Calu3 (cell line): ENCODE measurements at regions of chr15 and their contacts with region 1.

Region 1: DNA sequence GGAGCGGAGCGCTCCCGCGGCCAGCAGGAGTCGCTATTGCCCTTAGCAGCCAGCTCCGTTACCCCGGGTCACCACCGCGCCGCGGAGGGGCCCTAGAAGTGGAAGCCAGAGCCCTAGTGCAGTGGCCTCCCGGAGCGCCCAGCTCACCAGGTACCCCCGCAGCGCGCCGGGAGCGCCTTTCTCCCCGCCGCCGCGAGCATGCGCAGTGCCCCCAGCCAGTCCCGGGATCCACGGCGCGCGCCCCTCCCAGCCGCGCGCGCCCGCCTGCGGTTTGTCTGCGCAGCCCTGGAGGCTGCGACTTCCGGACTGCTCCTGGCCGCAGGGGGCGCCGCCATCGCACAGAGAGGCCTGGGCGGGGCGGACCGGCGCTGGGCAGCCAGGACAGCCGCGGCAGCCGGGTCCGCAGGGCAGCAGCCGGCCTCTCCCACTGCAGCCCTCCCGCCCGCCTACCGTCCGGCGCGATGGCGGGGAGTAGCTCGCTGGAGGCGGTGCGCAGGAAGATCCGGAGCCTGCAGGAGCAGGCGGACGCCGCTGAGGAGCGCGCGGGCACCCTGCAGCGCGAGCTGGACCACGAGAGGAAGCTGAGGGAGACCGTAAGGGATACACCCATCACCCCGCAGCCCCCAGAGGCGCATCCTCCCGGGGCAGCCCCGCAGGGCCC is 5.7 kb downstream of the TPM1 start:
- DNase-seq: peak; percentile 99
- H3K4me3 Mint-ChIP-seq: peak overlapping the region; percentile 98
- H3K27ac Mint-ChIP-seq: peak overlapping the region; percentile 77
- H3K4me1 Mint-ChIP-seq: peaks cover 76% of the 10 kb centered on the region
- H3K27me3 Mint-ChIP-seq: no peaks in the 10 kb centered on the region
- CTCF ChIP-seq: peak; percentile 91

Region 2: DNA sequence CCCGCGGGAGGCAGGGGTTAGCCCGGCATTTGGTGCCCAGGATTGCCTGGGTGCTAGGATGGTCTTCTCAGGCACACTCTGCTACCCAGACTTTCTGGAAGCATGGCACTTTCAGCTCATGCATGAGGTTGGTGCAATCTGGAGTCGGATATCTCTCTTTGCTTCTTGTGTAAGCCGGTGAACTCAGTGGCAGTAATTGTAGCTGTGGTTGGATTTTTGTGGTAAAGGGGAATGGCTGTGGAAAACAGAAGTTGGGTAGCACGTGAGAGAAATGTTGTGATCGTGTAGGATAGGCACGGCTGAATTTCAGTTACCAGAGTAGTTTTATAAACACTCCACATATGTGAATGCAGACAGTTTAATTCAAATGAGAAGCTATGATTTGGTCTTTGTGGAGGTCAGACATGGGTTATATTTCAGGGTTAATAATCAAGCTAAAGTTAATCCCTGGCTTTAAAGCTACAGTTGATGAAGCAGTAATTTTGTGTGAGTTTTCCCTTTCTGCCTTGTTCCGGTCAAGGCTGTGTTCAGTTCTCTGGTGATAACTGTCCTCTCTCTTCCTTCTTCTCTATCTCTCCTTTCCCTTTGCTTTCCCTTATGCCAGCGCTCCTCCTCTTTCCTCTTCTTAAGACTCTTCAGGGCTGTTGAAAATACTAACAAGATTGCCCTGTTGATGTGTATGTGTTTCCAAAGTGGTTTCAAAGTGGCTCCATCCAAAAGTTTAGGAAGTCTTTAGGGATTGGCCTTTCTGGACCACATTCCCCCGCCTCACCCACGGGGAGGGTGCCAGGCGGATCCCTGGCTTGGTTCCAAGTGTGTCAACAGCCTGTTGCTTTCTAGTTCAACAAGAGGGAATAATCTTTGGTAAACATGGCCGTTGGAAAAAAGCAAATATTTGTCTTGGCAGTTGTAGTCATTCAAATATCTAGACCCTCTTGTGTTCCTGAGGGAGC is 478.5 kb before region 1 on chr15:
- CTCF ChIA-PET with region 1: no interaction called
- intact Hi-C with region 1: no loop called
- DNase-seq: peak; percentile 81
- H3K4me3 Mint-ChIP-seq: peak overlapping the region; percentile 15
- H3K27ac Mint-ChIP-seq: no peak overlapping the region
- H3K4me1 Mint-ChIP-seq: peaks cover 28% of the 10 kb centered on the region
- H3K27me3 Mint-ChIP-seq: peaks cover 61% of the 10 kb centered on the region
- CTCF ChIP-seq: no peak

Region 3: GRCh38 chr15:63006032-63006878 is 42.0 kb before region 1 on chr15:
- CTCF ChIA-PET with region 1: no interaction called
- intact Hi-C with region 1: no loop called
- DNase-seq: no peak
- H3K4me3 Mint-ChIP-seq: no peak overlapping the region
- H3K27ac Mint-ChIP-seq: no peak overlapping the region
- H3K4me1 Mint-ChIP-seq: peaks cover 38% of the 10 kb centered on the region
- H3K27me3 Mint-ChIP-seq: no peaks in the 10 kb centered on the region
- CTCF ChIP-seq: no peak

Region 4: GRCh38 chr15:63093486-63094205 is 45.4 kb after region 1 on chr15:
- CTCF ChIA-PET with region 1: interaction called, 4 read pairs
- intact Hi-C with region 1: loop called (anchors 2 kb)
- DNase-seq: peak; percentile 89
- H3K4me3 Mint-ChIP-seq: no peak overlapping the region
- H3K27ac Mint-ChIP-seq: no peak overlapping the region
- H3K4me1 Mint-ChIP-seq: peaks cover 8% of the 10 kb centered on the region
- H3K27me3 Mint-ChIP-seq: no peaks in the 10 kb centered on the region
- CTCF ChIP-seq: peak; percentile 94

Region 5: GRCh38 chr15:63274427-63274826 is 226.2 kb after region 1 on chr15:
- CTCF ChIA-PET with region 1: no interaction called
- intact Hi-C with region 1: no loop called
- DNase-seq: no peak
- H3K4me3 Mint-ChIP-seq: no peak overlapping the region
- H3K27ac Mint-ChIP-seq: no peak overlapping the region
- H3K4me1 Mint-ChIP-seq: no peaks in the 10 kb centered on the region
- H3K27me3 Mint-ChIP-seq: no peaks in the 10 kb centered on the region
- CTCF ChIP-seq: no peak